Activated naive CD4-positive, alpha-beta T cell treated with anti-CD3 and anti-CD28 coated beads, Interleukin-2, amount 10 ng/mL, durations not matched to agents 7 days and 5 days (primary cell): ENCODE measurements at regions of chr4 and their contacts with region 1.

Region 1: DNA sequence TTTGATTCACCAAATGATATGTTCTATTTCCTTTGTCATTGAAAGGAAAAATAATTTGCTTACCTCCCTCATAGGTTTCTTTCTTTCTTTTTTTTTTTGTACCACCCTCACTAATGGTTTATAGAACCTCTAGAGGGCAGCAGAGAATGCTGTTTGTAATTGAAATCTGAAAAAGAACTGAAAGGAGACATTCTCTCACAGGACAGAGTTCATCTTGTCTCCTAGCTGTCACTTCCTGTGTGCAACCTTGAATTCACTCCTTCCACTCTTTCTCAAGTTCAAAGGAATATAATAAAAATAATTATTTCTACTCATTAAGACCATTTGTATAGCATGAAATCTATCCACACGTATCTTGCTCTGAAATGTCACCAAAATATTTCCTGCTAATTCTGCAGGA is 51.0 kb downstream of the GUCY1B1 start:
- DNase-seq: no peak
- H3K4me3 Mint-ChIP-seq: no peak overlapping the region
- H3K27ac Mint-ChIP-seq: no peak overlapping the region
- H3K4me1 Mint-ChIP-seq: no peaks in the 10 kb centered on the region
- H3K27me3 Mint-ChIP-seq: no peaks in the 10 kb centered on the region

Region 2: DNA sequence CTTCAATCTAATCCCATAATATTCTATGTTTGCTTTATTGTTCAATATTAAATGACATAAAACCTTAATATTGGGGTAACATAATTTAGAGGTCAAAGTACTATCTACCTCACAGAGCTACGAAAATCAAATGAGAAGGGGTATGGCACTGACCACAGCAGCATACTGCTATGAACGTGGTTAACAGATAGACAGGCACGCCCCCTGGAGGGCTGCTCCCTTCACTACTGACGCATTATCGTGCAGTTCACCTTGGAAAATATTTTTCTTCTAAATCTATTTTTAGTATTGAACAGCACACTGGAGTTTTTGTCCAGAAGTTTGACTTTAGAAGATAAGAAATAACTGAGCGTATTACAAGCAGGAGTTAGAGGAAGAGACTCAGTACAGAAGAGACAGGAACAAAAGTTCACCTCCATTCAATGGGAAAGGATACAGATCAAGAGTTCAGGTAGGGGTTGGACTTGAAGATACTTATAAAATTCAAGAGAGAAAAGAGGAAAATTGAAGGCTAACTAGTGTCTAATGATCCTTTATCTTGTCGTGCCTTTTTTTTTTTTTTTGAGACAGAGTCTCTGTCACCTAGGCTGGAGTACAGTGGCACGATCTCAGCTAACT is 455.8 kb before region 1 on chr4:
- CTCF ChIA-PET with region 1: no interaction called
- DNase-seq: peak; percentile 52
- H3K4me3 Mint-ChIP-seq: no peak overlapping the region
- H3K27ac Mint-ChIP-seq: no peak overlapping the region
- H3K4me1 Mint-ChIP-seq: no peaks in the 10 kb centered on the region
- H3K27me3 Mint-ChIP-seq: no peaks in the 10 kb centered on the region

Region 3: GRCh38 chr4:155734065-155734464 is 75.8 kb before region 1 on chr4:
- CTCF ChIA-PET with region 1: no interaction called
- DNase-seq: no peak
- H3K4me3 Mint-ChIP-seq: no peak overlapping the region
- H3K27ac Mint-ChIP-seq: no peak overlapping the region
- H3K4me1 Mint-ChIP-seq: no peaks in the 10 kb centered on the region
- H3K27me3 Mint-ChIP-seq: no peaks in the 10 kb centered on the region

Region 4: DNA sequence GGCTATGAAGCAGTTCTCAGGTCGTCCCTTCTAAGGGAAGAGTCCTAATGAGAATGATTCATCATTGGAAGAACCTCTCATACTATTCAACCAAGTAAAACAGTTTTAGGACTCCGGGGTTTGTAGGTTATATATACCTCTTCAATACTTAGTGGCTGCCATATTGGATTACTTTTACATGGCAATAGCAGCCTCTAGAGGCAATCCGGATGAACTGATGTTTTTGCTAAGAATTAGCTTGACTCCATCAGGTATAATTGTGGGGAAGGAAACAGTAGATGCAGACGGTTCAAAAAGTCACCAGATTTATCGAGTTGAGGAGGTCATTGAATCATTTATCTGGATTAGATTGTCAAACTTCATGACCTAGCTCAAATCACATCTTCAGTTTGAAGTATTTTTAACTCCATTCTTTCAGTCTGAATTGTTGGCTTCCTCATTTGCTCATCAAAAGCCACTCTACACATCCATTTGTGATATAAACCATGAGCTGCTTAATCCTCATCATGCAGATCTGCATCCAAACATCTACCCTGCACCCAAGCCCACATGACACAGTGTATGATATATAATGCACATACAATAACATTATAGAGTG is 22.6 kb before region 1 on chr4:
- CTCF ChIA-PET with region 1: no interaction called
- DNase-seq: peak; percentile 22
- H3K4me3 Mint-ChIP-seq: no peak overlapping the region
- H3K27ac Mint-ChIP-seq: no peak overlapping the region
- H3K4me1 Mint-ChIP-seq: no peaks in the 10 kb centered on the region
- H3K27me3 Mint-ChIP-seq: no peaks in the 10 kb centered on the region

Region 5: GRCh38 chr4:155828628-155829027 is 18.8 kb after region 1 on chr4:
- CTCF ChIA-PET with region 1: no interaction called
- DNase-seq: no peak
- H3K4me3 Mint-ChIP-seq: no peak overlapping the region
- H3K27ac Mint-ChIP-seq: no peak overlapping the region
- H3K4me1 Mint-ChIP-seq: no peaks in the 10 kb centered on the region
- H3K27me3 Mint-ChIP-seq: no peaks in the 10 kb centered on the region

Region 6: GRCh38 chr4:155953151-155954114 is 143.6 kb after region 1 on chr4 and contains the start of gene CTSO:
- CTCF ChIA-PET with region 1: interaction called, 17 read pairs
- DNase-seq: peak; percentile 83
- H3K4me3 Mint-ChIP-seq: peak within 1 kb of the TSS; percentile 86
- H3K27ac Mint-ChIP-seq: peak within 1 kb of the TSS; percentile 95
- H3K4me1 Mint-ChIP-seq: peaks cover 17% of the 10 kb centered on the region
- H3K27me3 Mint-ChIP-seq: no peaks in the 10 kb centered on the region